GM12878 (cell line): ENCODE measurements at regions of chr6 and their contacts with region 1.

Region 1: DNA sequence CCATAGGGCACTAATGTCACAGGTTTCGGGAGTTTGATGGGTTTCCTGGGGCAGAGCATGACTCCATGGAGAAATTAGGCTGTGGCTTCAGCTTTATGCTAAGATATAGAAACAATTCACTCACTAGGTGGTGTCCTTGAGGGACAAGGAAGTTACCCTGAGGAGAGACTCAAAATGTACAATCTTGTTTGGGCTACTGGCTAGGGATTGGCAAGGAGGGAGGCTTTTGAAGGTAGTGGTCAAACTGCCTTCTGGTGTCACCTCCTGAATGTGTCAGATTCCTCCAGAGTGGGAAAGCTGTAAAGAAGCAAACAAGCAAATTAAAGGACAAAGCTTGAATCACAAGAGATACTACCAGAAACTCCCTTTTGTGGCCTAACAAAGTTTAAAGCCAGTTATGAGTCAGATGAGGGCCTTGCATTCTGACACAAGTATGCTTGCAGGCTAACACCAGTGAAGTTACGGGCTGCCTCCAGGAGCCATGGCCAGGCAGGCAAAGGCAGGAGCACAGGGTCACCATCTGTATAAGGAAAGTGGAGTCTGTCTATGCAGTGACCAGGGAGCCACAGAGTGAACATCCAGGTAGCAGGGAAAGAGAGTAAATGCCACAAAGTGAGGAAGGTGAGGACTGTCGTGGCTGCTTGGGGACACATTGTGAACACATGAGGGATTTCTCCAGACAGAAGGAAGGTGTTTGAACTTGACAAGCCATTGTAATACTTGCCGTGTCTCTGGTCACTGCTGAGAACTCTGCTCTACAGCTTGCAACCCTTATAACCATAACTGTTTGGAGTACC is 107.7 kb upstream of the DTNBP1 start:
- DNase-seq: peak; percentile 62
- ATAC-seq: peak; percentile 88
- H3K4me3 ChIP-seq: no peak overlapping the region
- H3K27ac ChIP-seq: peak overlapping the region; percentile 38
- H3K4me1 ChIP-seq: peaks cover 7% of the 10 kb centered on the region
- H3K27me3 ChIP-seq: no peaks in the 10 kb centered on the region
- CTCF ChIP-seq: peak; percentile 24 to 32 (median 30); a peak in 5 of 6 replicates
- EP300 ChIP-seq: peak; percentile 32 to 76; a peak in 2 of 4 replicates
- POLR2A ChIP-seq: no peak
- RAD21 ChIP-seq: peak; percentile 44

Region 2: DNA sequence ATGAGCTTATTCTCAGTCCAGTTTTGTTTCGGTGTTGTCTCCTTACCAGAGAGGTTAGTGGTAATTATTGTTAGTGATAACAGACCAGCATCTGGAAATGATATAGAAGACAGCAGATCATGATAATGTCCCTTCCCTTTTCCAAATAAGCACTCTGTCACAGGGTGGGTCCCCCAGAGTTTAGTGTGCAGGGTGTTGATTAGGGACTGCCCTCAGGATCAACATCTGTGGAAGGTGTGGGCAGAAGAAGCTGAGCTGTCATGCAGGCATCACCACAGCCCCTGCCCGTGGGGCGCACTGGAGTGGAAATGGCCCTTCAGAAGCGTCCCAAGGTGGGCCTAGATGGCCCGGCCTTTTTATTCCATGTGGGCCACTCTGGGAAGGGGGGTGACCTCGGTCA is 40.1 kb before region 1 on chr6:
- CTCF ChIA-PET with region 1: interaction called, 3 read pairs
- POLR2A ChIA-PET with region 1: interaction called, 6 read pairs
- RAD21 ChIA-PET with region 1: interaction called, 18 read pairs
- SMC1A ChIA-PET with region 1: interaction called, 39 read pairs
- in situ Hi-C with region 1: no loop called
- intact Hi-C with region 1: no loop called
- DNase-seq: no peak
- ATAC-seq: no peak
- H3K4me3 ChIP-seq: no peak overlapping the region
- H3K27ac ChIP-seq: no peak overlapping the region
- H3K4me1 ChIP-seq: no peaks in the 10 kb centered on the region
- H3K27me3 ChIP-seq: no peaks in the 10 kb centered on the region
- CTCF ChIP-seq: no peak
- EP300 ChIP-seq: no peak
- POLR2A ChIP-seq: no peak
- RAD21 ChIP-seq: no peak

Region 3: GRCh38 chr6:15747354-15747883 is 23.1 kb before region 1 on chr6:
- CTCF ChIA-PET with region 1: interaction called, 5 read pairs
- POLR2A ChIA-PET with region 1: interaction called, 3 read pairs
- RAD21 ChIA-PET with region 1: interaction called, 10 read pairs
- SMC1A ChIA-PET with region 1: interaction called, 14 read pairs
- in situ Hi-C with region 1: no loop called
- intact Hi-C with region 1: no loop called
- DNase-seq: no peak
- ATAC-seq: no peak
- H3K4me3 ChIP-seq: no peak overlapping the region
- H3K27ac ChIP-seq: no peak overlapping the region
- H3K4me1 ChIP-seq: no peaks in the 10 kb centered on the region
- H3K27me3 ChIP-seq: no peaks in the 10 kb centered on the region
- CTCF ChIP-seq: no peak
- EP300 ChIP-seq: no peak
- POLR2A ChIP-seq: no peak
- RAD21 ChIP-seq: no peak

Region 4: DNA sequence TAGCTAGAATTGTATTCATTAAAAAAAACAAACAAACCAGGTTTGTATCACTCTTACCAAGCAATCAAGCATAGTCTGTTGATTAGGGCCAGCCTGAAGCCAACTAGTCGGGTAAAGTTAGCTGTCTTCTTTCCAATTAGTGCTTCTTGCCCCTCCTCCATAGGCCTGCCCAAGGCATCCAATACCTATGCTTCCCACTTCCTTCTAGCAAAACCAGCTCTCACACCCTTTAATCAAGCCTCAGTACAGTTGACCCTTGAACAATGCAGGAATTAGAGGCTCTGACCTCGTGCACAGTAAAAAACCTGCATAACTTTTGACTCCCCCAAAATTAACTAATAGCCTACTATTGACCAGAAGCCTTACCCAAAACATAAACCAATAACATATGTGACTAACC is 11.3 kb after region 1 on chr6:
- CTCF ChIA-PET with region 1: interaction called, 7 read pairs
- POLR2A ChIA-PET with region 1: interaction called, 5 read pairs
- RAD21 ChIA-PET with region 1: interaction called, 12 read pairs
- SMC1A ChIA-PET with region 1: interaction called, 13 read pairs
- in situ Hi-C with region 1: no loop called
- intact Hi-C with region 1: no loop called
- DNase-seq: no peak
- ATAC-seq: no peak
- H3K4me3 ChIP-seq: no peak overlapping the region
- H3K27ac ChIP-seq: no peak overlapping the region
- H3K4me1 ChIP-seq: no peaks in the 10 kb centered on the region
- H3K27me3 ChIP-seq: no peaks in the 10 kb centered on the region
- CTCF ChIP-seq: no peak
- EP300 ChIP-seq: no peak
- POLR2A ChIP-seq: no peak
- RAD21 ChIP-seq: no peak

Region 5: GRCh38 chr6:15870333-15871043 is 99.9 kb after region 1 on chr6:
- CTCF ChIA-PET with region 1: interaction called, 6 read pairs
- POLR2A ChIA-PET with region 1: interaction called, 15 read pairs
- RAD21 ChIA-PET with region 1: interaction called, 55 read pairs
- SMC1A ChIA-PET with region 1: interaction called, 36 read pairs
- in situ Hi-C with region 1: no loop called
- intact Hi-C with region 1: loop called (anchors 5 kb)
- DNase-seq: no peak
- ATAC-seq: no peak
- H3K4me3 ChIP-seq: no peak overlapping the region
- H3K27ac ChIP-seq: no peak overlapping the region
- H3K4me1 ChIP-seq: no peaks in the 10 kb centered on the region
- H3K27me3 ChIP-seq: no peaks in the 10 kb centered on the region
- CTCF ChIP-seq: no peak
- EP300 ChIP-seq: no peak
- POLR2A ChIP-seq: no peak
- RAD21 ChIP-seq: no peak

Region 6: DNA sequence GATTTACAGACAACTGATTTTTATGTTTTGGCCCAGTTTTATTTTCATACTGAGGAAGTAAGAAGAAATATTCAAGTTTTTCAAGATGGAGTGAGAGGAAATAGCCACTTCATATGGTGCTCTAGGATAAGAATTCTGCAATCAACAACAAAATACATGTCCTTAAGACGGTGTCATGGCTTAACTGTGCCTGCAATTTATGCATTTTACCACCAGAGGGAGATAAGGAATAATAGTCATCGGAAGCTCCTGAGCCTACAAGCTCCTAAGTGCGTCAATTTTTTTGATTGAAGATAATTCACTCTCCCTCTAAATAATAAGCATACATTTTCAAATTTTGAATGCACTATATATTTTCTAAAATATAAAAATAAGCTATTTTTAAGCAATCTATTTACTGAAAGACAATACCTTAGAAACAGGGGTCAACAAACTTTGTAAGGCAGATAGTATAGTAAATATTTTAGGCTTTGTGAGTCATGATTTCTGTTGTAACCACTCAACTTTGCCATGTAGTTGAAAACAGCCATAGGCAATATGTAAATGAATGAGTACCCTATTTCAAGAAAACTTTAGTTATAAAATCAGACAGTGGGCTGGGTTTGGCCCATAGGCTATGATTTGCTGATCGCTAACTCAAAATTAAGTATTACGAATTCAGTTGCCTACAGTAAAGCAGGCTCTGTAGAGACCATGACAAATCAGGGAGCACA is 123.2 kb after region 1 on chr6:
- CTCF ChIA-PET with region 1: interaction called, 9 read pairs
- POLR2A ChIA-PET with region 1: interaction called, 3 read pairs
- RAD21 ChIA-PET with region 1: interaction called, 130 read pairs
- SMC1A ChIA-PET with region 1: interaction called, 198 read pairs
- in situ Hi-C with region 1: no loop called
- intact Hi-C with region 1: no loop called
- DNase-seq: no peak
- ATAC-seq: 0 out of 3 replicates have a peak, but pooled peaks have one; percentile 22
- H3K4me3 ChIP-seq: no peak overlapping the region
- H3K27ac ChIP-seq: no peak overlapping the region
- H3K4me1 ChIP-seq: peaks cover 14% of the 10 kb centered on the region
- H3K27me3 ChIP-seq: no peaks in the 10 kb centered on the region
- CTCF ChIP-seq: peak in 2 of 3 experiments; percentile 37 to 59; a peak in 3 of 6 replicates
- EP300 ChIP-seq: no peak
- POLR2A ChIP-seq: no peak
- RAD21 ChIP-seq: peak; percentile 41

Region 7: GRCh38 chr6:16043171-16044135 is 272.9 kb after region 1 on chr6:
- CTCF ChIA-PET with region 1: no interaction called
- POLR2A ChIA-PET with region 1: no interaction called
- RAD21 ChIA-PET with region 1: no interaction called
- SMC1A ChIA-PET with region 1: interaction called, 12 read pairs
- in situ Hi-C with region 1: no loop called
- intact Hi-C with region 1: no loop called
- DNase-seq: peak; percentile 62
- ATAC-seq: peak; percentile 91
- H3K4me3 ChIP-seq: no peak overlapping the region
- H3K27ac ChIP-seq: peak overlapping the region; percentile 59
- H3K4me1 ChIP-seq: peaks cover 29% of the 10 kb centered on the region
- H3K27me3 ChIP-seq: no peaks in the 10 kb centered on the region
- CTCF ChIP-seq: no peak
- EP300 ChIP-seq: peak; percentile 27 to 58; a peak in 2 of 4 replicates
- POLR2A ChIP-seq: no peak
- RAD21 ChIP-seq: no peak